ENCODE measurements at regions of chr7 and their contacts with region 1.

Region 1: DNA sequence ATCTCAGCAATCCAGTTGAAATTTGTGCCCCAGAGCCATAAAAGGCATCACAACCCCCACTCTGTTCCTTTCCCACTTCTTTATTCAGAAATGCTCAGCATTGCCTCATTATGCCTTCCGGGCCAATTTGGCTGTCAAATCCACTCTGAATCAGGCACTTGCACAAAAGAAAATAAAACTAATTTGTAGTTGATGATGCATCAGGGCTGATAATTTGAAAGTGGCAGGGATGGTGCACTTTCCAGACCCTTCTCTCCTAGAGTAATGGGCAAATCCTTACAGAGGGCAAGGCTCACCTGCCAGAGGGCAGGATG is 147.9 kb upstream of the PDE1C start:
- DNase-seq: no peak
- ATAC-seq: no peak
- H3K4me3 ChIP-seq: no peak overlapping the region
- H3K27ac ChIP-seq: no peak overlapping the region
- H3K4me1 ChIP-seq: no peaks in the 10 kb centered on the region
- H3K27me3 ChIP-seq: no peaks in the 10 kb centered on the region; a peak in 1 of 4 replicates
- CTCF ChIP-seq: no peak
- EP300 ChIP-seq: no peak
- POLR2A ChIP-seq: no peak
- RAD21 ChIP-seq: no peak

Region 2: GRCh38 chr7:32191305-32191704 is 26.8 kb before region 1 on chr7:
- CTCF ChIA-PET with region 1: no interaction called
- POLR2A ChIA-PET with region 1: no interaction called
- RAD21 ChIA-PET with region 1: no interaction called
- SMC1A ChIA-PET with region 1: no interaction called
- in situ Hi-C with region 1: no loop called
- intact Hi-C with region 1: no loop called
- DNase-seq: no peak
- ATAC-seq: no peak
- H3K4me3 ChIP-seq: no peak overlapping the region
- H3K27ac ChIP-seq: no peak overlapping the region
- H3K4me1 ChIP-seq: no peaks in the 10 kb centered on the region
- H3K27me3 ChIP-seq: no peaks in the 10 kb centered on the region
- CTCF ChIP-seq: no peak
- EP300 ChIP-seq: no peak
- POLR2A ChIP-seq: no peak
- RAD21 ChIP-seq: no peak

Region 3: DNA sequence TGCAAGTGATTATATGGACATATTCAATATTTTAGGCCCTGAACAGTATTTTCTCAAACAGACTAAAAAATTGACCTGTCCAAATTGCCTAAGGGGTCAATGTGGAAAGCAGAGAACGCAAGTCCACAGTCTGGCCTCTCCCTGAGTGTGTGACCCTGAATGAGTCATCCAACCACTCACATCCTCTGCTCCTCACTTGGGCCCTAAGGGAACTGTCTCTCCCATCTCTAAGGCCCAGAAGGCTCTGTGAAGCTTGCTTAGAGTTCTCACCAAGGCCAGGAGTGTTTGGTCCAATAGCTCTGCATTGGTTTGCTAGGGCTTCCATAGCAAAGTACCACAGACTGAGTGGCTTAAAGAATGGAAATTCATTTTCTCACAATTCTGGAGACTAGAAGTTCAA is 117.0 kb after region 1 on chr7:
- CTCF ChIA-PET with region 1: no interaction called
- POLR2A ChIA-PET with region 1: no interaction called
- RAD21 ChIA-PET with region 1: no interaction called
- SMC1A ChIA-PET with region 1: no interaction called
- in situ Hi-C with region 1: no loop called
- intact Hi-C with region 1: no loop called
- DNase-seq: no peak
- ATAC-seq: no peak
- H3K4me3 ChIP-seq: no peak overlapping the region
- H3K27ac ChIP-seq: no peak overlapping the region
- H3K4me1 ChIP-seq: no peaks in the 10 kb centered on the region
- H3K27me3 ChIP-seq: no peaks in the 10 kb centered on the region
- CTCF ChIP-seq: no peak
- EP300 ChIP-seq: no peak
- POLR2A ChIP-seq: no peak
- RAD21 ChIP-seq: no peak

Region 4: GRCh38 chr7:32479574-32480200 is 261.6 kb after region 1 on chr7:
- CTCF ChIA-PET with region 1: no interaction called
- POLR2A ChIA-PET with region 1: no interaction called
- RAD21 ChIA-PET with region 1: no interaction called
- SMC1A ChIA-PET with region 1: interaction called, 3 read pairs
- in situ Hi-C with region 1: loop called (anchors 5 kb)
- intact Hi-C with region 1: no loop called
- DNase-seq: no peak
- ATAC-seq: peak; percentile 62
- H3K4me3 ChIP-seq: no peak overlapping the region
- H3K27ac ChIP-seq: no peak overlapping the region
- H3K4me1 ChIP-seq: no peaks in the 10 kb centered on the region
- H3K27me3 ChIP-seq: no peaks in the 10 kb centered on the region
- CTCF ChIP-seq: peak; percentile 75 to 78 (median 77)
- EP300 ChIP-seq: no peak
- POLR2A ChIP-seq: no peak
- RAD21 ChIP-seq: peak; percentile 82